Adrenal gland (tissue), 19 donors: ENCODE measurements at regions of chr1 and their contacts with region 1.

Region 1: DNA sequence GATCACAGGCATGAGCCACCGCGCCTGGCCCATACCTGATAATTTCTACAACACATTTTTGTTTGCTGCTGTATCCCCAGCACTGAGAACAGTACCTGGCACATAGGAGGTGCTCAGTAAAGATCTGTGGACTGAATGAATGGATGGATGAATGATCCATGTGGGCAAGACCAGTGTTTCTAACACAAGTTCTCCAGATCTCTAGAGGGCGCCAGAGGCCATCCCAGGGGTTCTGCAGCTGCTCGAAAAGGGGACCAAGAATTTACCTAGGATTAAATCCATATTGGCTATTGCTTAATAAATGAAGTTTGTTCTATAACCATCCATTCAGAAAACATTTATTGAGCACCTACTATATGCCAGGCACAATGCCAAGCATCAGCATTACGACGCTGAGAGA is 167.7 kb downstream of the ACTL8 start:
- DNase-seq: peak; percentile 30 to 67 (median 58)
- H3K4me3 ChIP-seq: no peak overlapping the region
- H3K27ac ChIP-seq: no peak overlapping the region
- H3K4me1 ChIP-seq: no peaks in the 10 kb centered on the region
- H3K27me3 ChIP-seq: peaks cover 21% of the 10 kb centered on the region
- CTCF ChIP-seq: peak in 5 of 6 experiments; percentile 15 to 59 (median 45)
- POLR2A ChIP-seq: no peak

Region 2: GRCh38 chr1:18099026-18099425 is 176.2 kb after region 1 on chr1:
- intact Hi-C with region 1: loop called in 1 of 2 experiments (anchors 5 kb)
- DNase-seq: no peak
- H3K4me3 ChIP-seq: no peak overlapping the region
- H3K27ac ChIP-seq: no peak overlapping the region
- H3K4me1 ChIP-seq: no peaks in the 10 kb centered on the region
- H3K27me3 ChIP-seq: no peaks in the 10 kb centered on the region
- CTCF ChIP-seq: no peak
- POLR2A ChIP-seq: no peak

Region 3: GRCh38 chr1:18234790-18235242 is 312.0 kb after region 1 on chr1:
- intact Hi-C with region 1: loop called in 1 of 2 experiments (anchors 10 kb)
- DNase-seq: peak; percentile 43 to 88 (median 61)
- H3K4me3 ChIP-seq: no peak overlapping the region
- H3K27ac ChIP-seq: no peak overlapping the region
- H3K4me1 ChIP-seq: no peaks in the 10 kb centered on the region
- H3K27me3 ChIP-seq: peaks cover 3% of the 10 kb centered on the region
- CTCF ChIP-seq: peak; percentile 62 to 83 (median 74)
- POLR2A ChIP-seq: no peak

Region 4: DNA sequence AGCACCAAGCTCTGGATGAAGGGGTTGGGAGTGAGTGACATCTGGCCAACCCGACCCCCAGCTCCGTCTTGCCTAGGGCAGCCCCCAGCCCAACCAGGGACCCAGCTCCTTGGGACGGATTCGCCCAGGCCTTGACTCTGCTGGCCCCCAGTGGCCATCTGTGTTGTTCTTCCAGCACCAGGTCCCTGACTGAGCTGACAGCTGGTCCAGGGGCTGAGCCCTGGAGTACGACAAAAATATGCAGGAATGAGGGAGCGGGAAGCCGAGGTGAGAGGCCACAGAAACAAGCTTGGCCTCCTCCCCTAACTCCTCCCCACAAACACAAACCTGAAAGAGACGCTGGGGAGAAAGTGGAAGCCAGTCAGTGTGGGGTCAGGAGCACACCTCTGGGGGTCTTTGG is 652.8 kb after region 1 on chr1:
- intact Hi-C with region 1: loop called in 1 of 2 experiments (anchors 10 kb)
- DNase-seq: peak in 6 of 7 donors; percentile 54 to 81 (median 57)
- H3K4me3 ChIP-seq: no peak overlapping the region
- H3K27ac ChIP-seq: no peak overlapping the region
- H3K4me1 ChIP-seq: no peaks in the 10 kb centered on the region
- H3K27me3 ChIP-seq: peaks cover 9% of the 10 kb centered on the region
- CTCF ChIP-seq: peak; percentile 40 to 79 (median 55)
- POLR2A ChIP-seq: no peak